ENCODE measurements at regions of chr3 and their contacts with region 1.

Region 1: GRCh38 chr3:59450946-59451763 is 401.3 kb upstream of the CFAP20DC start:
- DNase-seq: peak; percentile 79
- H3K4me3 Mint-ChIP-seq: peak overlapping the region; percentile 41
- H3K27ac Mint-ChIP-seq: peak overlapping the region; percentile 94
- H3K4me1 Mint-ChIP-seq: peaks cover 70% of the 10 kb centered on the region
- H3K27me3 Mint-ChIP-seq: no peaks in the 10 kb centered on the region

Region 2: GRCh38 chr3:59107856-59108815 is 343.0 kb before region 1 on chr3:
- CTCF ChIA-PET with region 1: no interaction called
- intact Hi-C with region 1: no loop called
- DNase-seq: no peak
- H3K4me3 Mint-ChIP-seq: no peak overlapping the region
- H3K27ac Mint-ChIP-seq: no peak overlapping the region
- H3K4me1 Mint-ChIP-seq: no peaks in the 10 kb centered on the region
- H3K27me3 Mint-ChIP-seq: no peaks in the 10 kb centered on the region

Region 3: GRCh38 chr3:59235634-59236012 is 215.5 kb before region 1 on chr3:
- CTCF ChIA-PET with region 1: no interaction called
- intact Hi-C with region 1: loop called (anchors 10 kb)
- DNase-seq: peak; percentile 74
- H3K4me3 Mint-ChIP-seq: no peak overlapping the region
- H3K27ac Mint-ChIP-seq: no peak overlapping the region
- H3K4me1 Mint-ChIP-seq: peaks cover 8% of the 10 kb centered on the region
- H3K27me3 Mint-ChIP-seq: no peaks in the 10 kb centered on the region

Region 4: DNA sequence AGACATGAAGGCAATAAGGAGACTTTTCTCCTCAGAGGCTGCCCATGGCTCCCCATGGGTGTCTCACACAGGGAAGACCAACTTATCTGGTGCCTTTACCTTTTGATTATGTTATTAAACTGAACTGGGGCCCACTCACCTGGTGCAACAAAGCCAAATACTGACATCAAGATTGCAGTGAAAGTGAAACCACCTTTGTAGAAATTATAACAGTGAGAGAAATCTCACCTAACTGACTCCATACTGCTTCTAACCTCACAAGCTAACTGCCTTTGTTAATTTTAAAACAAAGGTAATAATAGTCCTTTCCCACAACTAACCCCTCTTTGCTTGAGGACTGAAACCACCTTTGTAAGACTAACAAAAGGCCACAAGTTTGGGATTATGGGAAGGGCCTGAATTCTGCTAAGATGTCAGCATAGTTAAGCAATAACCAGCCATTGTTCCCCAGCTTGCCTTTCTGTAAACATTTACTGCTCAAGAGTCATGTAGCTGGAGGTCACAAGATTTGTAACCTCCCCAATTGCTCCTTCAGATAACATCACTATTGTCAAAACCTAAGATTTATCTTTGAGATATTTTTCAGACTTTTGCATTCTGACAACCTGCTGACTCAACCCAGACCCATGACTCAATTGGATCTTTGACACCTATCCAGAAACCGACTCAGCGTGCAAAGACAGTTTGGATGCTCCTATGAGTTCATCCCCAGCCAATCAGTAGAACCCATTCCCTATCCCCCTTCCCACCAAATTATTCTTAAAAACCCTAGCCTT is 19.0 kb after region 1 on chr3:
- CTCF ChIA-PET with region 1: no interaction called
- intact Hi-C with region 1: loop called (anchors 2 kb)
- DNase-seq: peak; percentile 63
- H3K4me3 Mint-ChIP-seq: no peak overlapping the region
- H3K27ac Mint-ChIP-seq: no peak overlapping the region
- H3K4me1 Mint-ChIP-seq: peaks cover 28% of the 10 kb centered on the region
- H3K27me3 Mint-ChIP-seq: no peaks in the 10 kb centered on the region

Region 5: GRCh38 chr3:59526999-59527398 is 75.8 kb after region 1 on chr3:
- CTCF ChIA-PET with region 1: no interaction called
- intact Hi-C with region 1: loop called (anchors 2 kb)
- DNase-seq: no peak
- H3K4me3 Mint-ChIP-seq: no peak overlapping the region
- H3K27ac Mint-ChIP-seq: no peak overlapping the region
- H3K4me1 Mint-ChIP-seq: peaks cover 15% of the 10 kb centered on the region
- H3K27me3 Mint-ChIP-seq: peaks cover 2% of the 10 kb centered on the region

Region 6: DNA sequence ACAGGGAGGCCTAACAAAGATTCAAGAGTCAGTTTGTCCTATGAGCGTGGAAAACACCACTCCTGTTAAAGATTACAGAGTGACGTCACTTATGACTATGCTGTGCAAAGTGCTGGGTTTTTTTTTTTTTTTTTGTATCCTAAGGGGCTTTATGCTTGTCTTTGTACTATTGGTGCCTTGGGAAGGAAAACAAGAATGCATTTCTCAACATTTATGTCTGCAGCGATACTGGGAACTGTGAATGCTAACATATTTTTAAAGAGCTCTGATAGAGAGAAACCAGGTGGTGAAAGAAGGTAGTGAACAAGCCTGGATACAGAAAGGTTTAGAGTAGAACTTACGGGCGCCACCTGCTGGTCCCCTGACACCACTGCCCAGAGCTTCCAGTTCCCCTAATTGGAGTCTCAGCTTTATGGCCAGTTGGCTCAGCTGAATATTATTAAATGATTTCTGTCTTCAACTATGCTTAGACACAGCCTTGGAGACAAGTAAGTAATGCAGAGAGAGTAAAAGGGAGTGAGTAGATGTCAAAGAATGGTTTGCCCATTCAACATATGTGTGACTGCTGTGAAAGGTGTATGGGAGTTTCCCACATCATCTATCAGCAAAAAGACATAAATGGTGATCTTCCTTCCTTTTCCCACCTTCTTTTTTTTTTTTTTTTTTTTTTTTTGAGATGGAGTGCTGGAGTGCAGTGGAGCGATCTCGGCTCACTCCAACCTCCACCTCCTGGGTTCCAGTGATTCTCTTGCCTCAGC is 406.6 kb after region 1 on chr3:
- CTCF ChIA-PET with region 1: no interaction called
- intact Hi-C with region 1: loop called (anchors 10 kb)
- DNase-seq: peak; percentile 90
- H3K4me3 Mint-ChIP-seq: no peak overlapping the region
- H3K27ac Mint-ChIP-seq: peak overlapping the region; percentile 6
- H3K4me1 Mint-ChIP-seq: peaks cover 35% of the 10 kb centered on the region
- H3K27me3 Mint-ChIP-seq: no peaks in the 10 kb centered on the region

Region 7: GRCh38 chr3:60010781-60011180 is 559.6 kb after region 1 on chr3:
- CTCF ChIA-PET with region 1: no interaction called
- intact Hi-C with region 1: loop called (anchors 10 kb)
- DNase-seq: peak; percentile 80
- H3K4me3 Mint-ChIP-seq: peak overlapping the region; percentile 75
- H3K27ac Mint-ChIP-seq: peak overlapping the region; percentile 97
- H3K4me1 Mint-ChIP-seq: peaks cover 87% of the 10 kb centered on the region
- H3K27me3 Mint-ChIP-seq: no peaks in the 10 kb centered on the region

Region 8: DNA sequence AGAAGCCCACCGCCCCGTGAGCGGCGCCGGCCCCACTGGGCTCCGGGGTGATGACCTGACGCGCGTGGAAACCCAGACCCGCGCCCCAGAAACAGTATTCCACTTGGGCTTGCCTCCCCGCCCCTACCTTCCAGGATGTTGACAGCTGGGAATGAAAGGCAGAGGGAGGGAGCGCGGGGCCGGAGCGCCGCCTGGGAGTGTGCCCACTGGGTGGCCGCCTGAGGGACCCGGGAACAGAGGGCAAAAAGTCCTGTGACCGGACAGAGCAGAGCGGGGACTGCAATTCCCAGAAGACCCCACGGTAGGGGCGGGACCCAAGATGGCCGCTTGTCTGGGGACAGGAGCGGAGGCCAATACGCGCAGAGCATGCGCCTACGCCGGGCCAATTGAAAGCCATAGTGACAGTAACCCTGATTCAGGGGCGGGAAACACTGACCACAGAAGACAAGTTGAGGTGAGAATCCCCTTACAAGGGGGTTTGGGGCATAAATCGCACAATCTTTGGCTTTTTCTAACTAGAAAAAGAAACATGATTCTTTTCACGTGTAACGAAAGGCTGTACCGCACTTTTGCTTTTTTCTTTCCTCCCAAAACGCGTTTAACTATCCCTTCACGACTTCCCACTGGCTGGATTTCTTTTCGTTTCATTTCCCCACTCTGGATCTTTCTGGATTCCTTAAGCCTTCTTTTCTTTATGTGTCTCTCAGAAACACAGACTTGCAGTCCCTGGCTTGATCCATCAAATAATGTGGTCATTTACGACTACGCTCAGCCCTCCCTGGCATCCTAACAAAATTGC is 1800.2 kb after region 1 on chr3 and contains the start of gene FHIT:
- CTCF ChIA-PET with region 1: no interaction called
- intact Hi-C with region 1: loop called (anchors 2 kb)
- DNase-seq: peak; percentile 96
- H3K4me3 Mint-ChIP-seq: peak within 1 kb of the TSS; percentile 91
- H3K27ac Mint-ChIP-seq: peak within 1 kb of the TSS; percentile 87
- H3K4me1 Mint-ChIP-seq: peaks cover 11% of the 10 kb centered on the region
- H3K27me3 Mint-ChIP-seq: peaks cover under 1% of the 10 kb centered on the region
- total RNA-seq, gene FHIT: 20.2 to 22.7 TPM